ENCODE measurements at regions of chr1 and their contacts with region 1.

Region 1: DNA sequence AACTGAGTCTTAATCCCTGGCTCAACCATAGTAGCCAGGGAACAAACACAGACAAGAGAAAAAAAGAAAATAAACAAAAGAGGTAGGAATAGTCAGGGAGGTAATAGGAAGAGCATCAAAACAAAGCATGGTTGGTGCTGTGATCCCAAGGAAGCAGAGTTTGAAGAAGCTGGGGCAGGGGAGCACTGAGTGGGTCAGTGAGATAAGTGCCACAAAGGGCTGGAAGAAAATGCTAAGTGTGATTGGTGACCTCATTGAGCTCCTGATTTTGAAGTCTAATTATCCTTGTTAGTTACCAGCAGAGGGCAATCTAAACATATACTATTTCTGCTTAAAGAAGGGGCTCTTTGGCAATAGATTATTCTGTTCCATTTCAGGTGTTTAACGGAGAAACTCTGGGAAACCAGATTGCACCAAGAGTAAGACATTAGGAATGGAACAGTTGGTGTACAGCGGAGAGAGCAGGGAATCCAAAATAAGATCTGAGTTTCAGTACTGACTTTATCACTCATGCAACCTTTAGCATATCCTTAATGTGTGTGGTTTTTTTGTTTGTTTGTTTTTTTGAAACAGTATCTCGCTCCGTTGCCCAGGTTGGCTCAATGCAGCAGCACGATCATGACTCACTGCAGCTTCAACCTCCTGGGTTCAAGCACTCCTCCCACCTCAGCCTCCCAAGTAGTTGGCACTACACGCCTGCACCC is 30.7 kb upstream of the KIAA1614 start:
- ATAC-seq: peak; percentile 76 to 91 (median 84)
- H3K4me3 ChIP-seq: no peak overlapping the region
- H3K27ac ChIP-seq: no peak overlapping the region
- H3K4me1 ChIP-seq: no peaks in the 10 kb centered on the region

Region 2: GRCh38 chr1:180743868-180744267 is 138.1 kb before region 1 on chr1:
- in situ Hi-C with region 1: no loop called
- ATAC-seq: no peak
- H3K4me3 ChIP-seq: no peak overlapping the region
- H3K27ac ChIP-seq: no peak overlapping the region
- H3K4me1 ChIP-seq: no peaks in the 10 kb centered on the region

Region 3: DNA sequence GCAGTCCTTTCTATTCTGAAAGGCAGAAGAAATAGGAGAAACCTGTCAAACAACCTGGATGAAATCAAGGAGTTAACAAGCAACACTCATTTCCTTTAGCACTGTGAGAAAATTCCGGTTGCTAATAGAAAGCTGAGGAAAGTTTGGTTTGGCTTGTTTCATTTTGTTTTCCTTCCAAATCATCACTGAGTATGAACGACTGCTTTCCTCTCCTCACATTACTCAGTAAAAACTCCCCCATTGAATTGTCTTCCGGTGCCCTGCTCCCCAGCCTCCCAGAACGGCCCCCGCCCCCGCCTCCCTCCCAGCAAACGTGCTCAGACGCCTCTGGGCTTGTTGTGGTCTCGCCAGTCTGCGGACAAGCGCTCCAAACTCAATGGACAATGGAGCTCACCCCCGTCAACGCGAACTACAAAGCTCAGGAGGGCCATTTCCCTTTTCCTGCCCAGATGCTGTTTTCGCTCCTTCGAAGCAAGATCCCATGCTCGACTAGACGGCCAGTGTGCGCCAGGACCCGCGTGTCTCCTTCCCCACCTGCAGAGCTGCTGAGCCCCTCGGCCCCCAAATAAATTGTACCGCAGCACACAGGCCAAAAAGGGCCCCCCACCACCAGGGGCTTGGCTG is 140.0 kb after region 1 on chr1:
- in situ Hi-C with region 1: no loop called
- ATAC-seq: peak; percentile 7 to 36 (median 19)
- H3K4me3 ChIP-seq: peak overlapping the region; percentile 55 to 90 (median 75)
- H3K27ac ChIP-seq: peak overlapping the region; percentile 74 to 80
- H3K4me1 ChIP-seq: peaks cover 6 to 13% of the 10 kb centered on the region in 2 donors

Region 4: GRCh38 chr1:181142096-181142958 is 260.4 kb after region 1 on chr1:
- in situ Hi-C with region 1: loop called in 4 of 9 experiments (anchors 10 to 25 kb)
- ATAC-seq: peak; percentile 78 to 100 (median 97)
- H3K4me3 ChIP-seq: peak overlapping the region in 4 of 5 donors; percentile 0 to 16 (median 4)
- H3K27ac ChIP-seq: peak overlapping the region; percentile 39 to 65
- H3K4me1 ChIP-seq: peaks cover 12 to 17% of the 10 kb centered on the region in 2 donors

Region 5: DNA sequence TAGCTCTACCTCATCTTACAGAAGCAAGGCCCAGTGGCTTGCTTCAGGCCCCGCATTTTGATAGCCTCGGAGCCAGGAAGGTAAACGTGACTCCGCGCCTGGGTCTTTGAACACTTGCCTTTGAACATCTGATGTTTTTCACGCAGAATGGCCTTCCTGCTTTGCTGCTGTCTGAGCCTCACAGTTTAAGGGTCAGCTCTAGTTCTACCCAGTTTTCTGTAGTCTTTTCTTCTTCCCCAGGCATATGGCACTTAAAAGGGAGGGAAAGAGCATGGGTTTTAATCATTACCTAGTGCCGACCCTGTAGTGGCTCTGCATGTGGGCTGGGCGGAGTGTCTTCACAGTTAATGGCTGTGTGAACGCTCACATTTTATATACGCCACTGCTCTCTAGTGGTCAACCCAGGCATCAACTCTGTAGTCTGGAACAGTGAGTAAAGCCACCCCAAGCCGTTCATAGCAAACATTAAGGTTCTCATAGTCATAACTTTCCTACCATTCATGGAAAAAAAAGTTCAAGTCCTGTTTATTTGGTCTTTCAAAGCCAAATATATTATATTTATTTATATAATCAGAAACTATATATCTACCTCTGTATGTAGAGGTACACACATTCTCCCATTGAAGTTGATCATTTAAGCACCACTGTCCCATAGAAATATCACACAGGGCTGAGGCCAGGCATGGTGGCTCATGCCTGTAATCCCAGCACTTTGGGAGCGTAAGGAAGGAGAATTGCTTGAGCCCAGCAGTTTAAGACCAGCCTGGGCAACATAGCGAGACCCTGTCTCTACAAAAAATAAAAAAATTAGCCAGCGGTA is 284.6 kb after region 1 on chr1:
- in situ Hi-C with region 1: loop called in 3 of 9 experiments (anchors 10 to 25 kb)
- ATAC-seq: peak; percentile 94 to 100 (median 99)
- H3K4me3 ChIP-seq: no peak overlapping the region
- H3K27ac ChIP-seq: no peak overlapping the region
- H3K4me1 ChIP-seq: peaks cover 3 to 5% of the 10 kb centered on the region in 2 donors

Region 6: DNA sequence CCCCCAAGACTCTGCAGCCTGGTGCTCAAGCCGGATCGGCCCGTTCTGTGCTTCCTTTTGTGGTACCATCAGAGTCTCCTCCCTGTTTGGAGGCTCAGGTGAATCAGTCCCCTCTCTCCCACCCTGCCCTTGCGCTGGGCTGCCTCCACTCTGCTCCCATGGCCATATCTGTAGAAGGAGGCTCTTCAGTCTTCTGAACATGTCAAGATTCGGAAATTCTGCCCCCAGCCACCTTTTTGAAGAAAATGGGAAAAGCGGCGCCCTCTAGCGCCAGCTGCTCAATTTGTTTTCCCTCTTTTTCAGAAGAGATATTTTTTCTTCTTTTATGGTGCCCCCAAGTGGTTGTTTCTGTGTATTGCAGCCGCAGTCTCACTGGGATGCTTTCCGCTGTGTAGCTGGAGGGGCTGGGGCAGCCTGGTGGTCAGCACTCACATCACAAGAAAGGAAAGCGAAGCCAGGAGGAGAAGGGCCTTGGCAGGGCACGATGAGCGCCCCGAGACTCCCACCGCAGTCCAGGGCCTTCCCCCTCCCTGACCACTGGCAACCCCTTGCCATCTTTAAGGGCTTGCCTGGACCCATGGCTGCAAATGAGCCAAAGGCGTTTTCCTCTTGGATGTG is 542.9 kb after region 1 on chr1:
- in situ Hi-C with region 1: loop called in 1 of 9 experiments (anchors 25 kb)
- ATAC-seq: peak; percentile 52 to 88 (median 66)
- H3K4me3 ChIP-seq: no peak overlapping the region
- H3K27ac ChIP-seq: no peak overlapping the region
- H3K4me1 ChIP-seq: no peaks in the 10 kb centered on the region

Measured in motor neuron (in vitro differentiated cells).